Heart left ventricle (tissue), 16 donors: ENCODE measurements at regions of chr13 and their contacts with region 1.

Region 1: DNA sequence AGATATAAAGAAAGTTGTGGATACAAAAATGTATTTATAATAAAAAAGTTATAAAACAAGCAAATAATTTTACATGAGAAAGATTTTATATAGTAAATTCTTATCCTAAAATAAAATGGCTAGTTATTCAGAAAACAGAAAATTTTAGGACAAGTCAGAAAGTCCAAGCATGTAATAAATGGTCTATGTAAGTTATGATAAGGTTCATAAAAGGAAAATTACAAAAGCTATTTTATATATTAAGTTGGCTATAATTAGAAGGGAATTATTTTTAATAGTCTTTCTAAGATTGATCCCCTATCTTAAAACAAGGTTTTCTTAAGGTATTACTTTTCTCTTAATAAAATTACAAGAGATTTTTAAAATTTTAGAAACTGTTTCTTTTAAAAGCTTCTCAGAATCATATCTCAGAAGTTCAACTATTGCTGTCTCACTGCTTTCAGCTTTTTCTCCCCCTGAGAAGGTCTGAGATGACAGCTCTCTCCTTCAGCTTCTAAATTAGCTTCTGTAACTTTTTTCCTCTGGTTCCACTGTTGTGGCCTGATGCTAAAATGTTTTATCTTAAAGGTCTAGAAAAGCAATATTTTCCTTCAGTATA is 8.7 kb downstream of the CCDC169 start:
- DNase-seq: no peak
- ATAC-seq: no peak
- H3K4me3 ChIP-seq: no peak overlapping the region
- H3K27ac ChIP-seq: no peak overlapping the region
- H3K4me1 ChIP-seq: no peaks in the 10 kb centered on the region
- H3K27me3 ChIP-seq: no peaks in the 10 kb centered on the region
- CTCF ChIP-seq: no peak
- POLR2A ChIP-seq: no peak

Region 2: DNA sequence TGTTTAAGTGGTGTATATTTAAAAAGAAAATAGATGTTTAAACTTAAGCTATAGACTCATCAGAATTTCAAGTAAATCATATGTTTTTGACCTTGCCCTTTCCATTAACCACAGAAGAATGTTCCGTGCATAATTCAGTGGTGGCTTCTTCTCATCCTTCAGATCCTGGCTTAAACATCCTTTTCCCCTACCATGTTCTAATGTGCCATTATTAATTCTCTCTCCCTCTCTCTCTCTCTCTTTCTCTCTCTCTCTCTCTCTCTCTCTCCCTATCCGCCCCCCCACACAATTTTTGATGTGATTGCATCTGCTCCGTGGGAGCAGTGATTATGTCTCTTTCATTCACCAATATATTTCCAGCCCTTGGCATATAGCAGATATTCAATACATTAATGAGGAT is 274.1 kb before region 1 on chr13:
- intact Hi-C with region 1: no loop called
- DNase-seq: no peak
- ATAC-seq: no peak
- H3K4me3 ChIP-seq: no peak overlapping the region
- H3K27ac ChIP-seq: no peak overlapping the region
- H3K4me1 ChIP-seq: no peaks in the 10 kb centered on the region
- H3K27me3 ChIP-seq: no peaks in the 10 kb centered on the region
- CTCF ChIP-seq: no peak
- POLR2A ChIP-seq: no peak

Region 3: GRCh38 chr13:36385489-36385888 is 96.6 kb after region 1 on chr13:
- intact Hi-C with region 1: loop called in 5 of 10 experiments (anchors 5 to 10 kb)
- DNase-seq: no peak
- ATAC-seq: no peak
- H3K4me3 ChIP-seq: no peak overlapping the region
- H3K27ac ChIP-seq: no peak overlapping the region
- H3K4me1 ChIP-seq: no peaks in the 10 kb centered on the region
- H3K27me3 ChIP-seq: peaks cover 0 to 17% (median 0%) of the 10 kb centered on the region in 9 donors
- CTCF ChIP-seq: no peak
- POLR2A ChIP-seq: no peak

Region 4: DNA sequence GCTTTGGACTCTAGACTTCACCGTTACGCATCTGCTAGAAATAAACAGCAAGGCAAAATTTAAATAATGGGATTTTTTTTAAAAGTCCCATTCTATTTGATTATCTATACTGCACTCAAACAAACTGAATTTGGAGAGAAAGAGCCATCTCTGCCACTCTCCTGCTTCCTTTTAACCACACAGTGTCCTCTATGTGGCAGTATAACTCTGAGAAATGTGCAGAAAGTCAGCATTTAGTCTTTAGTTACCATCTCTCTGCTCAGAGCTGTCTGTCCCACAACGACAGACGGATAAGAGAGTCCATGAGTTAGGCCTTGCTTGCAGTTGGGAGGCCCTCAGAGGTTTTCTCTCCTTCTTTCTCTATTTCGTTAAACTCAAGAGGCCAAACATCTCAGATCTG is 164.6 kb after region 1 on chr13:
- intact Hi-C with region 1: no loop called
- DNase-seq: no peak
- ATAC-seq: peak in 3 of 4 donors; percentile 50 to 68 (median 55)
- H3K4me3 ChIP-seq: no peak overlapping the region
- H3K27ac ChIP-seq: no peak overlapping the region
- H3K4me1 ChIP-seq: no peaks in the 10 kb centered on the region
- H3K27me3 ChIP-seq: no peaks in the 10 kb centered on the region
- CTCF ChIP-seq: peak in 10 of 12 donors; percentile 15 to 54 (median 43)
- POLR2A ChIP-seq: no peak